PC-3 (cell line): ENCODE measurements at regions of chr3 and their contacts with region 1.

Region 1: DNA sequence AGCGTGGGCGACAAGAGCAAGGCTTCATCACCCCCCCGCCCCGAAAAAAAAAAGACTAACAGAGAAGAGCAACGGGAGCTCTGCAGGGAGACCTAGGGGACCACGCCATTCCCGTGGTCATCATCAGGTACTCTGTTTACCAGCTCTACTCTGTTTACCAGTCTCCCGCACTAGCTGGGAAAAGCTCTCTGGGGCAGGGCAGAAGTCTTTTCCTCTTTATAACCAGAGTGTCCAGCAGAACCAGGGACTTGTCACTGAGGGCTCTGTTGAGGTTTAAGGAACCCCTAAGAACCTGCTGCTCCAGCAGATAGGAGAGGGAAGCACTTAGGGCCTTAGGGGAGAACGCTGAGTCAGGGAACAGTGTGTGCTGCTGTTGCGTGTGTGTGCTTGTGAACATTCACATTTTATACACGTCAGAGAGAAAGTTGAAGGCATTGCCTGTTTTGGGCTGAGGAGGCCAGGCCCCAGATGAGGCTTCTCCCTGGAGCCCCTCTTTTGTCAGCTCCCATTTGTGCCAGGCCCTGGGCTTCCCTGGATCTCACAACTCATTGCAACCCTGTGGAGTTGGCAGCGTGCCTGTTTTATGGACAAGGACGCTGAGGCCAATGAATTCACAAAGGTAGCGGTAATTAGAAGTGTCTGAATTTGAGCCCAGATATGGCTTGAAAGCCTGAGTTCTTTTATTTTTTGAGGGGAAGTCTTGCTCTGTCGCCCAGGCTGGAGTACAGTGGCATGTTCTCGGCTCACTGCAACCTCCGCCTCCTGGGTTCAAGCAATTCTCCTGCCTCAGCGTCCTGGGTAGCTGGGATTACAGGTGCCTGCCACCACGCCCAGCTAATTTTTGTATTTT is 24.2 kb upstream of the ERICH6 start:
- DNase-seq: no peak
- ATAC-seq: no peak
- H3K4me3 ChIP-seq: no peak overlapping the region
- H3K27ac ChIP-seq: no peak overlapping the region
- H3K4me1 ChIP-seq: peaks cover 10% of the 10 kb centered on the region
- H3K27me3 ChIP-seq: no peaks in the 10 kb centered on the region
- CTCF ChIP-seq: no peak

Region 2: DNA sequence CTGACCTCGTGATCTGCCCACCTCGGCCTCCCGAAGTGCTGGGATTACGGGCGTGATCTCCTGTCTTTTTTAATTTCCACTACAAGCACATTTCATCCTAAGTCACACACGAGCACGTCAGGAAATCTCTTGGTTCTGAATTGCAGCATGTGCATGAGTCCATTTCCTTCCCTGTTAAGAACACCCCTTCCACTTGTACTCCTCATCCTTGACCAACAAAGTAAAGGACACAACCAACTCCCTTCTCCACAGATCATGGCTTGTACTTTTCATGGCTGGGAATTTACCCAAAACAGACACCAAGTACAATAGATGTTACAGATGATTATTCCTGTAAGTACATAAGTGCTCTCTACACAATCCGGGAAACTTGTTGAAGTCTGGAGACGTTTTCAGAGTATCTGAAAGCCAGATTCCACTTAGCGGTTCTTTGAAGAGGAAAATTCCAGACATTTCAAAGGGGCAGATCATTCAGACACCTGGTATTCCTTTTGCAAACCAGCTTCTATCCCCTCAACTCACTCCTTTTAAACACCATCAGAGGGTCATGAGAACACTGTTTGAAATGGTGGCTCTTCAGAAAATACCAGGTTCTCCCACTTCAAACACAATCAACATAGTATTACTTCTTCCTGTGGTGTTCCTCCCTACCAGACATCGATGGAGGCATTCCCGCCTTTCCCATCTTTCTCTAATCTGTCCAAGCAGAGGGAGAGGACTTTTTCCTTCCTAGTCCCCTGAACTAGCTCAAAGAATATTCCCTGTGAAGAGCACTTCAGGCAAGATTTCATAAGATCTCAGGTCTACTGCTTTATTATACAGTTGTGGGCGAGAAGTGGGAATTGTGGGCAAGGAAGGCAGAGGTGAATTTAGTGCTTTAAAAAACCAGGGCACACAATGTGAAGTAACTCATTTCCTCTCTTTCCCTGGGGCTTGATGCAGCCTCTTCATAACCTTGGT is 399.9 kb before region 1 on chr3:
- CTCF ChIA-PET with region 1: no interaction called
- POLR2A ChIA-PET with region 1: interaction called, 16 read pairs
- intact Hi-C with region 1: no loop called
- DNase-seq: no peak
- ATAC-seq: no peak
- H3K4me3 ChIP-seq: no peak overlapping the region
- H3K27ac ChIP-seq: no peak overlapping the region
- H3K4me1 ChIP-seq: 0 out of 2 replicates have a peak, but pooled peaks cover 3% of the 10 kb centered on the region
- H3K27me3 ChIP-seq: no peaks in the 10 kb centered on the region
- CTCF ChIP-seq: no peak